ENCODE measurements at regions of chr1 and their contacts with region 1.

Region 1: DNA sequence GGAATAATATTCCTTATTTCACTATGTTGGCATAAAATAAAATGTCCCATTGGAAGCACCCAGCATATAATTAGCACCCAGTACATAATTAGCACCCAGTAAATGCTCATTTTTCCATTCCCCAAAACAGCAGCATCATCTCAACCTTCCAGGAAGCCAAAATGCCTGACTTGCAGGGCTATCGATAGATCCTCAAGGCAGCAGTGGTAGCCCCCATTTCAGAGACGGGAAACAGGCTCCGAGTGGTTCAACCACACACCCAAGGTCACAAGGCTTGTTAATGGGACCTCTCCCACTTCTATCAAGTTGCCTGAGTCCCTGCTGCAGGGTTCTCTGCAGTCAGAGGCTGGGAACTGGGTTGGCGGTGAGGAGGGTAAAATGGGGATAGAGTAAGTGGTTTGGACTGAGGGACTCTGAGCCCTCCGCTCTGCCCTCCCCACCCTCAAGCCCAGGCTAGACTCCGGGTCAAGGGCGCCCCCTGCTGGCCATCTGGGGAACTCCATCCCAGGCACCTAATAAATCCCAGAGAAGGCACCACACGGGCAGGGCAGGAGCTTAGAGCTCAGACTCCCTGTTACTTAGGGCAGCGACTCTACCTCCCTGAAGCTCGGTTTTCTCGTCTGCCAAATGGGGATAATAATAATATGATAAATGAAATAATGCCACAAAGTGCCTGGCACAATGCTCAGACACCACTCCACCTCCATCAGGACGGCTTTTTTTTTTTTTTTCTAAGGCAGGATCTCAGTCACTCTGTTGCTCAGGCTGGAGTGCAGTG is 21.9 kb upstream of the LAPTM5 start:
- DNase-seq: peak; percentile 78
- H3K4me3 ChIP-seq: no peak overlapping the region
- H3K27ac ChIP-seq: no peak overlapping the region
- H3K4me1 ChIP-seq: peaks cover 7% of the 10 kb centered on the region
- H3K27me3 ChIP-seq: peaks cover 0 to 3% of the 10 kb centered on the region in 2 experiments
- CTCF ChIP-seq: peak; percentile 90 to 93
- POLR2A ChIP-seq: no peak

Region 2: GRCh38 chr1:30718636-30719405 is 60.7 kb before region 1 on chr1:
- CTCF ChIA-PET with region 1: interaction called, 726 read pairs
- POLR2A ChIA-PET with region 1: interaction called, 10 read pairs
- dilution Hi-C with region 1: no loop called
- intact Hi-C with region 1: loop called (anchors 1 kb)
- DNase-seq: peak; percentile 96
- H3K4me3 ChIP-seq: peak overlapping the region; percentile 10 to 66 (median 27)
- H3K27ac ChIP-seq: peak overlapping the region; percentile 78
- H3K4me1 ChIP-seq: peaks cover 5% of the 10 kb centered on the region
- H3K27me3 ChIP-seq: no peaks in the 10 kb centered on the region
- CTCF ChIP-seq: peak; percentile 92 to 94
- POLR2A ChIP-seq: peak; percentile 72

Region 3: DNA sequence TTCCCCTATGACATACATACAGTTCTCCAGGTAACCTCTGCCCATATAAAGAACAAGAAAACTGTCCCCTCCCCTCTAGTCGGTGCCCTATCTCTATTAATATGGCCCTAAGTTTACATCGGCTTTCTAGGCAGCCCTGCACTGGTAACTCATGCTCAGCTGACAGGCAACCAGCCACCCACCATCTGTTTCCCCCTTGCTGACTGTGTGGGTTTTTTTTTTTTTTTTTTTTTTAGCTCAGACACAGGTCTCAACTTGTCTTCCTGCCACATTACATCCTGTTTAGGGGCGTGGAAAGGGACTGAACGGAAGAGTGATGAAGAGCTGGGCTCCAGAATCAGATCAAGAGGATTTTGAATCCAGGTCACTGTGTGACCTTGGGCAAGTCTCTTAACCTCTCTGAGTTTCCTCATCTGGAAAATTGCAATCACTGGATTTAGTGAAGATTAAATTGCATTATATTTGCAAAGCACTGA is 35.9 kb before region 1 on chr1:
- CTCF ChIA-PET with region 1: interaction called, 12 read pairs
- POLR2A ChIA-PET with region 1: no interaction called
- dilution Hi-C with region 1: no loop called
- intact Hi-C with region 1: no loop called
- DNase-seq: peak; percentile 17
- H3K4me3 ChIP-seq: no peak overlapping the region
- H3K27ac ChIP-seq: no peak overlapping the region
- H3K4me1 ChIP-seq: peaks cover 16% of the 10 kb centered on the region
- H3K27me3 ChIP-seq: no peaks in the 10 kb centered on the region
- CTCF ChIP-seq: no peak
- POLR2A ChIP-seq: no peak

Region 4: DNA sequence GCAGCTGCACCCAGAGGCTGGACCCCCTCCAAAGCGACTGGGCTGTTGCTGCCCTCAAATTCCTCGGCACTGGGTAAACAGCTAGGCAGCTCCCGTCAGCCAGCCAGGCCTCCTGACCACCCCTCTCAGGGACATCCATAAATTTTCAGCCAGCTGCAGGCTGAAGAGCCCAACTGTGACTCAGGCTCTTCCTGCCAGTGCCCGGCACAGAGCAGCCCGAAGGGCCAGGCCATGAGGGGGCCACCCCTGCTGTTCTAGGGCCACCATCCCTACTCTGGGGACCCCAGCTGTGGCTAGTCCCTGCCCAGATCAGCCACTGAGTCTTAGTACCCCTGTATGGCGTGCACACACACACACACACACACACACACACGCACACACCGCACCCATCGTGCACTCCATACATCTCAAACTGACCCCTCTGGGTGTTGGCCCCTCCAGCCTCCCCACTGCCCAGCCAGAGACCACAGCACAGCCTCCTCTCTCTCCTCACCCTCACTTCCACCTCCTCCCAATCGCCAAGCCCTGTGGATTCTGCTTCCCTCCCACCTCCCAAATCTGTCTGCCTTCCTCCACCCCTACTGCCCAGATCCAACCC is 15.7 kb before region 1 on chr1:
- CTCF ChIA-PET with region 1: interaction called, 38 read pairs
- POLR2A ChIA-PET with region 1: no interaction called
- dilution Hi-C with region 1: no loop called
- intact Hi-C with region 1: loop called (anchors 2 kb)
- DNase-seq: peak; percentile 28
- H3K4me3 ChIP-seq: no peak overlapping the region
- H3K27ac ChIP-seq: no peak overlapping the region
- H3K4me1 ChIP-seq: no peaks in the 10 kb centered on the region
- H3K27me3 ChIP-seq: no peaks in the 10 kb centered on the region
- CTCF ChIP-seq: no peak
- POLR2A ChIP-seq: no peak

Region 5: DNA sequence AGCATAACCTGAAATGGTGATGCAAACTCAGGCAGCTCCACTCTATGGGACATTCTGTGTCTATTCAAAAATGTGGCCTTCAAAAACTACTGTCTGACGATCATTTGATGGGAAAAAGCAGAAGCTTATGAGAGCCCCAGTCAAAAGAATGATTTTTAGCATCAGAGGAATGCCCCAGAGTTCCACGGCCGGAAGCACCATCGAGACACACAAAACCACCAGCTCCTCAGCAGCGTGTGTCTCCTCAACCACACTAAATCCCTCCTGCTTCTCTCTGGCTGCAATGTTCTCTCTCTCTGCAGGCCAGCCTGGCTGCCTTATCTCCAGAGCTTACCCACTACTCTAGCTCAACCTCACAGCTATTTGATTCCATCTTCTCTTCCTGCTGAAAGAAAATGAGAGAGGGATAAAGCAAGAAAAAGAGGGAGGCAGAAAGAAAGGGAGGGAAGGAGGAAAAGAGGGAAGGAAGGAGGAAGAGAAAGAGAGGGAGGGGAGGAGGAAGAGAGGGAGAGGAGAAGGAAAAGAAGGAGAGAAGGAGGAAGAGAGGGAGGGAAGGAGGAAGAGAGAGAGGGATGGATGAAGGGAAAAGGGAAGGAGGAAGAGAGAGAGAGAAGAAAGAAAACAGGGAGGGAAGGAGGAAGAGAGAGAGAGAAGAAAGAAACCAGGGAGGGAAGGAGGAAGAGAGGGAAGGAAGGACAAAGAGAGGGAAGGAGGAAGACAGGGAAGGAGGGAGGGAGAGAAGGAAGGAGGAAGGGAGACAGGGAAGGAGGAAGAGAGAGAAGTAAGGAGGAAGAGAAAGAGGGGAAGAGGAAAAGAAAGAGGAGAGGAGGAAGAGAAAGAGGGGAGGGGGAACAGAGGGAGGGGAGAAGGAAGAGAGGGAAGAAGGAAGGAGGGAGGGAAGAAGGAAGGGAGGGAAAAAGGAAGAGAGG is 11.6 kb after region 1 on chr1:
- CTCF ChIA-PET with region 1: interaction called, 20 read pairs
- POLR2A ChIA-PET with region 1: no interaction called
- dilution Hi-C with region 1: no loop called
- intact Hi-C with region 1: no loop called
- DNase-seq: no peak
- H3K4me3 ChIP-seq: no peak overlapping the region
- H3K27ac ChIP-seq: no peak overlapping the region
- H3K4me1 ChIP-seq: no peaks in the 10 kb centered on the region
- H3K27me3 ChIP-seq: peaks cover 1 to 9% of the 10 kb centered on the region in 2 experiments
- CTCF ChIP-seq: no peak
- POLR2A ChIP-seq: no peak

Region 6: GRCh38 chr1:30919025-30919881 is 139.8 kb after region 1 on chr1:
- CTCF ChIA-PET with region 1: interaction called, 167 read pairs
- POLR2A ChIA-PET with region 1: no interaction called
- dilution Hi-C with region 1: no loop called
- intact Hi-C with region 1: no loop called
- DNase-seq: no peak
- H3K4me3 ChIP-seq: no peak overlapping the region
- H3K27ac ChIP-seq: no peak overlapping the region
- H3K4me1 ChIP-seq: no peaks in the 10 kb centered on the region
- H3K27me3 ChIP-seq: peaks cover 0 to 2% of the 10 kb centered on the region in 2 experiments
- CTCF ChIP-seq: no peak
- POLR2A ChIP-seq: no peak